ENCODE measurements at regions of chr2 and their contacts with region 1.

Region 1: GRCh38 chr2:222903234-222904220 is 42.7 kb downstream of the ACSL3 start:
- DNase-seq: no peak
- H3K4me3 ChIP-seq: no peak overlapping the region
- H3K27ac ChIP-seq: no peak overlapping the region
- H3K4me1 ChIP-seq: peaks cover 2 to 22% (median 15%) of the 10 kb centered on the region in 4 experiments; a peak in 6 of 7 replicates
- H3K27me3 ChIP-seq: no peaks in the 10 kb centered on the region
- CTCF ChIP-seq: peak in 2 of 3 experiments; percentile 56 to 58; a peak in 2 of 4 replicates
- EP300 ChIP-seq: no peak
- POLR2A ChIP-seq: no peak
- RAD21 ChIP-seq: peak; percentile 74 to 81

Region 2: DNA sequence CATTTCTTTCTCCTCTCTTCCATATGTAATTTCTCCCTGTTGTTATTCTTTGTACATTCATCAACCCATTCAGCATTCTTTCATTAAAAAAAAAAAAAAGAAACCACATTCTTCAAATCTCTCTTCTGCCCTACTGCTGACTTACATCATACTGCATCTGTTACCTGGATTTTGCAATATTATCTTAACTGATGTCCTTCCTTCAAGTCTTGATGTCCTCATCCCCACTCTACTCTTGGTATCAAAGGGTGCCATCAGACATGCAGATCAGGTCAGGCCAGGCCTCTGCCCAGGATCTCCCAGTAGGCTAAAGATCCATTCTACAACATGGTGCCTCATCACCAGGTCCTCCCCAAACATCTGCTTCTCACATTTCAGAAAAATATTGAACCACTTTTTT is 388.6 kb before region 1 on chr2:
- CTCF ChIA-PET with region 1: no interaction called
- POLR2A ChIA-PET with region 1: no interaction called
- DNase-seq: no peak
- H3K4me3 ChIP-seq: no peak overlapping the region
- H3K27ac ChIP-seq: no peak overlapping the region
- H3K4me1 ChIP-seq: peaks cover 0 to 4% (median 1%) of the 10 kb centered on the region in 4 experiments; a peak in 2 of 7 replicates
- H3K27me3 ChIP-seq: peaks cover 0 to 2% (median 0%) of the 10 kb centered on the region in 4 experiments; a peak in 1 of 7 replicates
- CTCF ChIP-seq: no peak
- EP300 ChIP-seq: no peak
- POLR2A ChIP-seq: no peak
- RAD21 ChIP-seq: no peak

Region 3: GRCh38 chr2:222797261-222797660 is 106.3 kb before region 1 on chr2:
- CTCF ChIA-PET with region 1: interaction called, 13 read pairs
- POLR2A ChIA-PET with region 1: no interaction called
- DNase-seq: no peak
- H3K4me3 ChIP-seq: no peak overlapping the region
- H3K27ac ChIP-seq: no peak overlapping the region
- H3K4me1 ChIP-seq: peaks cover 0 to 13% (median 1%) of the 10 kb centered on the region in 4 experiments; a peak in 3 of 7 replicates
- H3K27me3 ChIP-seq: no peaks in the 10 kb centered on the region
- CTCF ChIP-seq: peak in 2 of 3 experiments; percentile 22 to 53; a peak in 2 of 4 replicates
- EP300 ChIP-seq: no peak
- POLR2A ChIP-seq: no peak
- RAD21 ChIP-seq: peak; percentile 40 to 41

Region 4: GRCh38 chr2:222861411-222862105 is 42.0 kb before region 1 on chr2:
- CTCF ChIA-PET with region 1: interaction called, 16 read pairs
- POLR2A ChIA-PET with region 1: interaction called, 7 read pairs
- DNase-seq: no peak
- H3K4me3 ChIP-seq: peak overlapping the region; percentile 77 to 97 (median 83)
- H3K27ac ChIP-seq: peak overlapping the region; percentile 94
- H3K4me1 ChIP-seq: peaks cover 12 to 20% (median 16%) of the 10 kb centered on the region in 4 experiments; a peak in 6 of 7 replicates
- H3K27me3 ChIP-seq: no peaks in the 10 kb centered on the region
- CTCF ChIP-seq: no peak
- EP300 ChIP-seq: no peak
- POLR2A ChIP-seq: no peak
- RAD21 ChIP-seq: no peak

Region 5: GRCh38 chr2:222884114-222884771 is 19.3 kb before region 1 on chr2:
- CTCF ChIA-PET with region 1: interaction called, 12 read pairs
- POLR2A ChIA-PET with region 1: no interaction called
- DNase-seq: no peak
- H3K4me3 ChIP-seq: no peak overlapping the region
- H3K27ac ChIP-seq: no peak overlapping the region
- H3K4me1 ChIP-seq: peaks cover 0 to 4% (median 0%) of the 10 kb centered on the region in 4 experiments; a peak in 1 of 7 replicates
- H3K27me3 ChIP-seq: no peaks in the 10 kb centered on the region
- CTCF ChIP-seq: no peak
- EP300 ChIP-seq: no peak
- POLR2A ChIP-seq: no peak
- RAD21 ChIP-seq: no peak

Region 6: GRCh38 chr2:222891890-222892289 is 11.6 kb before region 1 on chr2:
- CTCF ChIA-PET with region 1: interaction called, 12 read pairs
- POLR2A ChIA-PET with region 1: interaction called, 3 read pairs
- DNase-seq: no peak
- H3K4me3 ChIP-seq: no peak overlapping the region
- H3K27ac ChIP-seq: no peak overlapping the region
- H3K4me1 ChIP-seq: peaks cover 0 to 10% (median 3%) of the 10 kb centered on the region in 4 experiments; a peak in 3 of 7 replicates
- H3K27me3 ChIP-seq: no peaks in the 10 kb centered on the region
- CTCF ChIP-seq: no peak
- EP300 ChIP-seq: no peak
- POLR2A ChIP-seq: no peak
- RAD21 ChIP-seq: no peak